SK-N-SH (cell line): ENCODE measurements at regions of chr3 and their contacts with region 1.

Region 1: DNA sequence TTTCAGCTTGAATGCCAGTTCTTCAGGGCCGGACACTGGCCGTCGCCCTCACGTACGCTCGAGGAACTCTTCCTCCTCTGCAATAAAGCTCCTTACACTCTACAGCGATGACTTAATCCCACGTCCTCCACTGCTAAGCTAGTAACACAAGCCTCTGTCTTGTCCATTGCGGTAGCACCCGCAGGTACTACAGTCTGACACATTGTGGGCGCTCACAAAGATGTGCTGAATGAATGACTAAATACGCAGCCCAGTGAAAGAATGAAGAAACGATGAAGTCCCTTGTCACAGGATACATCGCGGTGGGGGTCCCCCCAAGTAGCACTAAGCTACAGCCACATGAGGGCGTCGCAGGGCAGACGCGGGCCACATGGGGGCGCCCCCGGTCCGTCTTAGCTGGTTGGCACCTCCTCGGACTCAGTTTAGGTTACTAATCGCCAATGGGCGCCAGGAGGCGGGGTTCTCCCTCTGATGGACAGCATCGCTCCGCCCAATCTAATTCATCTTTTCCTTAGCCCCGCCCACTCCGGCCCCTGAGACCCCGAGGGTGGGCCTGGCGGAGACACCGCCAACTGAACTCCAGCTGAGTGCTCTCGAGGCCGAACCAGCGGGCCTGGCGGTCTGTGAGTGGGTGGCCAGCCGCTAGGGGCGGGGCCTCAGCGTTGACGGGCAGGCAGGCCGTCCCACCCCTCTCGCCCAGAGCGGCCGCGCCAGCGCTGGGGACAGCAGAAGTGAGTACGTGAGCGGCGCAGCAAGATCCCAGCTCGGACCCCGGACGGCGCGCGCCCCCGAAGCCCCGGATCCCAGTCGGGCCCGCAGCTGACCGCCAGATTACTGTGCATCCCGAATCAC is at the start of gene EPHB3:
- DNase-seq: peak; percentile 99
- H3K4me3 ChIP-seq: peak within 1 kb of the TSS; percentile 70 to 77
- H3K27ac ChIP-seq: no peak within 1 kb of the TSS; a peak in 1 of 4 replicates
- H3K4me1 ChIP-seq: peaks cover 17 to 42% of the 10 kb centered on the region in 2 experiments
- H3K27me3 ChIP-seq: peaks cover 12% of the 10 kb centered on the region; the same call in 1 of the 2 replicates
- CTCF ChIP-seq: peak; percentile 100
- EP300 ChIP-seq: no peak
- RAD21 ChIP-seq: peak; percentile 100
- polyA plus RNA-seq, gene EPHB3: 2.1 and 4.2 TPM in 2 replicates

Region 2: GRCh38 chr3:184384856-184385422 is 176.3 kb before region 1 on chr3:
- CTCF ChIA-PET with region 1: no interaction called
- POLR2A ChIA-PET with region 1: no interaction called
- DNase-seq: no peak
- H3K4me3 ChIP-seq: no peak overlapping the region
- H3K27ac ChIP-seq: no peak overlapping the region
- H3K4me1 ChIP-seq: peaks cover 0 to 4% of the 10 kb centered on the region in 2 experiments; a peak in 1 of 4 replicates
- H3K27me3 ChIP-seq: no peaks in the 10 kb centered on the region
- CTCF ChIP-seq: no peak
- EP300 ChIP-seq: no peak
- RAD21 ChIP-seq: no peak

Region 3: GRCh38 chr3:184592371-184593219 is 31.3 kb after region 1 on chr3:
- CTCF ChIA-PET with region 1: interaction called, 19 read pairs
- POLR2A ChIA-PET with region 1: interaction called, 3 read pairs
- DNase-seq: peak; percentile 84
- H3K4me3 ChIP-seq: no peak overlapping the region
- H3K27ac ChIP-seq: peak overlapping the region in 1 of 2 experiments; percentile 77; a peak in 2 of 4 replicates
- H3K4me1 ChIP-seq: peaks cover 7 to 58% of the 10 kb centered on the region in 2 experiments; a peak in 3 of 4 replicates
- H3K27me3 ChIP-seq: no peaks in the 10 kb centered on the region
- CTCF ChIP-seq: no peak
- EP300 ChIP-seq: peak in 1 of 2 experiments; percentile 60; a peak in 2 of 4 replicates
- RAD21 ChIP-seq: peak; percentile 24; the same call in 1 of the 2 replicates

Region 4: DNA sequence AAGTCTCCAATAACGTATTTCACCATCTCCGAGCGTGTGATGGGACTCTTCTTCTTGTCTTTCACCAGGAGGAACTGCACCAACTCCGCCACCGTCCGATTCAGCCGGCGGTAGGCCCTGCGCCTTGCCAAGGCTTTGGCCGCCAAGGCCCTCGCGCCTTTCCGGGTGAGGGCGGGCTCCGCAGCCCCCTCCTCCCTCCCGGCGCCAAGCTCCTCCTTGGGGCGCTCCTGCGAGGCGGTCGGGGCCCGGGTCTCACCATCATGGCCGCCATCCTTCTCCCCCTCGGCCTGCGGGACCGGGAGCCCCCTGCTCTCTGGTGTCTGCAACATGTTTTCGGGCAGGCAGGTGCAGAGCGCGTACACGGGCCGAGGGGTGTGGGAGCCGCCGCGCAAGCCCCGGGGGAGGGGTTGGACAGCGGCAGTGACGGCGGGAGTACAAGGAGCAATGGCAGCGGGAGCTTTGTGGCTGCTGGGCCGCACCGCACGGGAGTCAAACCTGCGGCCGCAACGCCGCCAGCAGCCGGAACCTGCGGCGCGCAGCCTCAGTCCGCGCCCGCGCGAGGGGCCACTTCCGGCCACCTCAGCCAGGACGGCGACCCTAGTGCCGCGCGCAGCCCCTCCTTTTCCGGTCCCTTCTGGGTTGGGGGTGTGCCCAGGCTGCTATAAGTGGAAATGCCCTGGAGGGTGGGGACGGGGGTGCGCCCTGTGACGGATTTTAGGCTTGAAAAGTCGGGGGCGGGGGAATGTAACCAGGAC is 150.4 kb after region 1 on chr3 and contains the start of gene MAGEF1:
- CTCF ChIA-PET with region 1: interaction called, 49 read pairs
- POLR2A ChIA-PET with region 1: interaction called, 6 read pairs
- DNase-seq: peak; percentile 95
- H3K4me3 ChIP-seq: peak within 1 kb of the TSS; percentile 82 to 91
- H3K27ac ChIP-seq: peak within 1 kb of the TSS; percentile 69 to 99
- H3K4me1 ChIP-seq: peaks cover 9 to 21% of the 10 kb centered on the region in 2 experiments; a peak in 3 of 4 replicates
- H3K27me3 ChIP-seq: no peaks in the 10 kb centered on the region
- CTCF ChIP-seq: no peak
- EP300 ChIP-seq: peak in 1 of 2 experiments; percentile 41; a peak in 1 of 4 replicates
- RAD21 ChIP-seq: no peak
- polyA plus RNA-seq, gene MAGEF1: 38.1 and 45.2 TPM in 2 replicates

Region 5: GRCh38 chr3:184757022-184757651 is 195.8 kb after region 1 on chr3:
- CTCF ChIA-PET with region 1: interaction called, 14 read pairs
- POLR2A ChIA-PET with region 1: no interaction called
- DNase-seq: no peak
- H3K4me3 ChIP-seq: no peak overlapping the region
- H3K27ac ChIP-seq: no peak overlapping the region
- H3K4me1 ChIP-seq: peaks cover 0 to 2% of the 10 kb centered on the region in 2 experiments; a peak in 1 of 4 replicates
- H3K27me3 ChIP-seq: no peaks in the 10 kb centered on the region
- CTCF ChIP-seq: no peak
- EP300 ChIP-seq: no peak
- RAD21 ChIP-seq: no peak

Region 6: GRCh38 chr3:184795522-184796190 is 234.4 kb after region 1 on chr3:
- CTCF ChIA-PET with region 1: interaction called, 28 read pairs
- POLR2A ChIA-PET with region 1: no interaction called
- DNase-seq: peak; percentile 80
- H3K4me3 ChIP-seq: no peak overlapping the region
- H3K27ac ChIP-seq: no peak overlapping the region
- H3K4me1 ChIP-seq: peaks cover 0 to 8% of the 10 kb centered on the region in 2 experiments; a peak in 1 of 4 replicates
- H3K27me3 ChIP-seq: no peaks in the 10 kb centered on the region; the same call in 1 of the 2 replicates
- CTCF ChIP-seq: no peak
- EP300 ChIP-seq: no peak
- RAD21 ChIP-seq: no peak

Region 7: GRCh38 chr3:184811999-184812661 is 250.8 kb after region 1 on chr3 and contains the start of gene VPS8:
- CTCF ChIA-PET with region 1: interaction called, 19 read pairs
- POLR2A ChIA-PET with region 1: no interaction called
- DNase-seq: peak; percentile 97
- H3K4me3 ChIP-seq: peak within 1 kb of the TSS; percentile 93 to 95
- H3K27ac ChIP-seq: peak within 1 kb of the TSS; percentile 49 to 62; a peak in 2 of 4 replicates
- H3K4me1 ChIP-seq: peaks cover 0 to 9% of the 10 kb centered on the region in 2 experiments; a peak in 3 of 4 replicates
- H3K27me3 ChIP-seq: no peaks in the 10 kb centered on the region
- CTCF ChIP-seq: peak; percentile 38; the same call in 1 of the 2 replicates
- EP300 ChIP-seq: no peak
- RAD21 ChIP-seq: no peak
- polyA plus RNA-seq, gene VPS8: 12.8 and 15.9 TPM in 2 replicates

Region 8: DNA sequence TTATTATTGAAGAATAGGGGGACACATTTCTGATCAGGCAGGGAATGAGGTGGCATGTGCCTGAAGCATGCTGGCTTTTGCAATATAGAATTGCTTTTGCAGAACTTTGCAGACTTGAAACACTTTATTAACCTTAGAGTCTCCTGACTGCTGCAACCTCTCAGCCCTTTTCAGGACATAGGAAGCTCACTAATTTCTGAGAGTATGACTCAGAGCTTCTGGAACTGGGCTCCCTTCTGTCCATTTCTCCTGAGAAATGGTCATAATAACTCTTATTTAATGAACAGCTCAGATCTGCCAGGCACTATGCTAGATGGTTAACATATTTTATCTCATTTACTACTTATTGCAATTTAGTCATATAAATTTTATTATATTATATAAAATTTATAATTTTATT is 1839.4 kb after region 1 on chr3:
- CTCF ChIA-PET with region 1: no interaction called
- POLR2A ChIA-PET with region 1: no interaction called
- DNase-seq: no peak
- H3K4me3 ChIP-seq: no peak overlapping the region
- H3K27ac ChIP-seq: no peak overlapping the region
- H3K4me1 ChIP-seq: no peaks in the 10 kb centered on the region; a peak in 1 of 4 replicates
- H3K27me3 ChIP-seq: no peaks in the 10 kb centered on the region
- CTCF ChIP-seq: no peak
- EP300 ChIP-seq: no peak
- RAD21 ChIP-seq: no peak